ENCODE measurements at regions of chr18 and their contacts with region 1.

Region 1: GRCh38 chr18:10928772-10929373 is 220.5 kb downstream of the PIEZO2 start:
- DNase-seq: peak; percentile 87
- ATAC-seq: peak; percentile 76
- H3K4me3 ChIP-seq: peak overlapping the region; percentile 48; the same call in 1 of the 2 replicates
- H3K27ac ChIP-seq: peak overlapping the region; percentile 96
- H3K4me1 ChIP-seq: peaks cover 37% of the 10 kb centered on the region
- H3K27me3 ChIP-seq: no peaks in the 10 kb centered on the region
- CTCF ChIP-seq: no peak
- EP300 ChIP-seq: peak; percentile 96 to 97
- POLR2A ChIP-seq: no peak
- RAD21 ChIP-seq: peak; percentile 24; the same call in 1 of the 2 replicates

Region 2: DNA sequence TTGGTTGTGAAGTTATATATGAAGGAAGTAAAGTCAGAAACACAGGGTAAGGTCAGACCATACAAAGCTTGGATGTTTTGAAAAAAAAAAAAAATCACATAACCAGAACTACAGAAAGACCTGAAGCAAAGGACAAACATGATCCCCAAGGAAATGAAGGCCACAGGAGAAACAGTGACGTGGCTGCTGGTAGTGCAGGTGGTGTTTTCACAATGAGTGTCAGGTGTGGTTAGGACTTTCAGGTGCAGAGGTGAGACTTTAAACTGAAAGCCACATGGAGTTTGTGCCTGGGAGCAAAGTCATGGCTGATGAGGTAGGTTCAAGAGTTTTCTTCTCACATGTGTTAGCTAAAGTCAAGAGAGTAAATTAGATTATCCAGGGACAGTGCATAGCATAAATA is 50.2 kb before region 1 on chr18:
- CTCF ChIA-PET with region 1: interaction called, 5 read pairs
- POLR2A ChIA-PET with region 1: interaction called, 4 read pairs
- RAD21 ChIA-PET with region 1: interaction called, 38 read pairs
- SMC1A ChIA-PET with region 1: interaction called, 71 read pairs
- in situ Hi-C with region 1: loop called (anchors 5 kb)
- intact Hi-C with region 1: loop called (anchors 1 kb)
- DNase-seq: peak; percentile 93
- ATAC-seq: peak; percentile 82
- H3K4me3 ChIP-seq: no peak overlapping the region
- H3K27ac ChIP-seq: peak overlapping the region; percentile 88
- H3K4me1 ChIP-seq: peaks cover 49% of the 10 kb centered on the region
- H3K27me3 ChIP-seq: no peaks in the 10 kb centered on the region
- CTCF ChIP-seq: no peak
- EP300 ChIP-seq: peak; percentile 90 to 96
- POLR2A ChIP-seq: no peak
- RAD21 ChIP-seq: 0 out of 2 replicates have a peak, but pooled peaks have one; percentile 17

Region 3: GRCh38 chr18:10892786-10893185 is 36.1 kb before region 1 on chr18:
- CTCF ChIA-PET with region 1: interaction called, 7 read pairs
- POLR2A ChIA-PET with region 1: interaction called, 14 read pairs
- RAD21 ChIA-PET with region 1: interaction called, 6 read pairs
- SMC1A ChIA-PET with region 1: interaction called, 46 read pairs
- in situ Hi-C with region 1: no loop called
- intact Hi-C with region 1: no loop called
- DNase-seq: no peak
- ATAC-seq: peak; percentile 29; the same call in 1 of the 3 replicates
- H3K4me3 ChIP-seq: no peak overlapping the region
- H3K27ac ChIP-seq: no peak overlapping the region
- H3K4me1 ChIP-seq: peaks cover 13% of the 10 kb centered on the region
- H3K27me3 ChIP-seq: no peaks in the 10 kb centered on the region
- CTCF ChIP-seq: no peak
- EP300 ChIP-seq: no peak
- POLR2A ChIP-seq: no peak
- RAD21 ChIP-seq: no peak

Region 4: GRCh38 chr18:10898417-10898974 is 30.4 kb before region 1 on chr18:
- CTCF ChIA-PET with region 1: interaction called, 5 read pairs
- POLR2A ChIA-PET with region 1: interaction called, 14 read pairs
- RAD21 ChIA-PET with region 1: interaction called, 4 read pairs
- SMC1A ChIA-PET with region 1: interaction called, 46 read pairs
- in situ Hi-C with region 1: no loop called
- intact Hi-C with region 1: loop called (anchors 2 kb)
- DNase-seq: no peak
- ATAC-seq: peak; percentile 86
- H3K4me3 ChIP-seq: peak overlapping the region; percentile 28; the same call in 1 of the 2 replicates
- H3K27ac ChIP-seq: peak overlapping the region; percentile 8; the same call in 1 of the 2 replicates
- H3K4me1 ChIP-seq: peaks cover 30% of the 10 kb centered on the region
- H3K27me3 ChIP-seq: no peaks in the 10 kb centered on the region
- CTCF ChIP-seq: no peak
- EP300 ChIP-seq: peak in 1 of 2 experiments; percentile 43; a peak in 1 of 4 replicates
- POLR2A ChIP-seq: no peak
- RAD21 ChIP-seq: no peak

Region 5: GRCh38 chr18:10946058-10946457 is 17.2 kb after region 1 on chr18:
- CTCF ChIA-PET with region 1: interaction called, 3 read pairs
- POLR2A ChIA-PET with region 1: interaction called, 11 read pairs
- RAD21 ChIA-PET with region 1: interaction called, 38 read pairs
- SMC1A ChIA-PET with region 1: interaction called, 70 read pairs
- in situ Hi-C with region 1: no loop called
- intact Hi-C with region 1: loop called (anchors 1 kb)
- DNase-seq: no peak
- ATAC-seq: no peak
- H3K4me3 ChIP-seq: no peak overlapping the region
- H3K27ac ChIP-seq: no peak overlapping the region
- H3K4me1 ChIP-seq: peaks cover 6% of the 10 kb centered on the region; the same call in 1 of the 2 replicates
- H3K27me3 ChIP-seq: no peaks in the 10 kb centered on the region
- CTCF ChIP-seq: no peak
- EP300 ChIP-seq: no peak
- POLR2A ChIP-seq: no peak
- RAD21 ChIP-seq: no peak

Region 6: GRCh38 chr18:11027862-11028261 is 99.0 kb after region 1 on chr18:
- CTCF ChIA-PET with region 1: interaction called, 3 read pairs
- POLR2A ChIA-PET with region 1: interaction called, 6 read pairs
- RAD21 ChIA-PET with region 1: interaction called, 5 read pairs
- SMC1A ChIA-PET with region 1: interaction called, 15 read pairs
- in situ Hi-C with region 1: no loop called
- intact Hi-C with region 1: no loop called
- DNase-seq: peak; percentile 68
- ATAC-seq: peak; percentile 99
- H3K4me3 ChIP-seq: no peak overlapping the region
- H3K27ac ChIP-seq: peak overlapping the region; percentile 73
- H3K4me1 ChIP-seq: peaks cover 25% of the 10 kb centered on the region
- H3K27me3 ChIP-seq: no peaks in the 10 kb centered on the region
- CTCF ChIP-seq: no peak
- EP300 ChIP-seq: peak in 1 of 2 experiments; percentile 45; a peak in 1 of 4 replicates
- POLR2A ChIP-seq: peak; percentile 49
- RAD21 ChIP-seq: no peak

Region 7: GRCh38 chr18:11052800-11053199 is 123.9 kb after region 1 on chr18:
- CTCF ChIA-PET with region 1: interaction called, 4 read pairs
- POLR2A ChIA-PET with region 1: no interaction called
- RAD21 ChIA-PET with region 1: interaction called, 3 read pairs
- SMC1A ChIA-PET with region 1: interaction called, 12 read pairs
- in situ Hi-C with region 1: no loop called
- intact Hi-C with region 1: no loop called
- DNase-seq: no peak
- ATAC-seq: peak; percentile 92
- H3K4me3 ChIP-seq: no peak overlapping the region
- H3K27ac ChIP-seq: peak overlapping the region; percentile 22; the same call in 1 of the 2 replicates
- H3K4me1 ChIP-seq: peaks cover 15% of the 10 kb centered on the region
- H3K27me3 ChIP-seq: no peaks in the 10 kb centered on the region
- CTCF ChIP-seq: no peak
- EP300 ChIP-seq: no peak; a peak in 1 of 4 replicates
- POLR2A ChIP-seq: no peak
- RAD21 ChIP-seq: no peak